Activated CD4-positive, alpha-beta memory T cell treated with anti-CD3 and anti-CD28 coated beads for 36 hours (primary cell): ENCODE measurements at regions of chr1 and their contacts with region 1.

Region 1: DNA sequence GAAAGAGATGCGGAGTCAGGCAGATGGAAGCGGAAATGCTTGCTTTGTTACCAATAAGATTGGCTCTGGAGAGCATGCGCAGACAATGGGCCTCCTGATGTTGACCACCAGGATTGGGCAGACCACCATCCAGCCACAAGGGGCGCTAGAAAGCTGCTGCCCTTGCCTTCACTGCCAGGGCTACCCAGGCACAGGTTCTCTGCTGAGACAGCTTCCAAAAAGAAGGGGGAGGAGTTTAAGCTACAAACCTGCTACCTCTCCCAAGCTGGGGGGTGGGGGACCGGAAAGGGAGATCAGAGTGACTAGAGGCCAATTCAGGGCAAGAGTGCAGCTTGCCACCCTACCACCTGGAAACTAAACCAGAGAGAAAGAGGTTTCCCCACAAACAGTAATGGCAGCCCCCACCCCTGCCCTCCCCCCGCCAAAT is 369.7 kb downstream of the RRAGC start:
- DNase-seq: peak; percentile 63
- H3K4me3 Mint-ChIP-seq: no peak overlapping the region
- H3K27ac Mint-ChIP-seq: no peak overlapping the region
- H3K4me1 Mint-ChIP-seq: no peaks in the 10 kb centered on the region
- H3K27me3 Mint-ChIP-seq: peaks cover 16% of the 10 kb centered on the region

Region 2: GRCh38 chr1:37978541-37978940 is 511.3 kb before region 1 on chr1:
- CTCF ChIA-PET with region 1: no interaction called
- POLR2A ChIA-PET with region 1: no interaction called
- intact Hi-C with region 1: no loop called
- DNase-seq: no peak
- H3K4me3 Mint-ChIP-seq: no peak overlapping the region
- H3K27ac Mint-ChIP-seq: no peak overlapping the region
- H3K4me1 Mint-ChIP-seq: no peaks in the 10 kb centered on the region
- H3K27me3 Mint-ChIP-seq: no peaks in the 10 kb centered on the region

Region 3: DNA sequence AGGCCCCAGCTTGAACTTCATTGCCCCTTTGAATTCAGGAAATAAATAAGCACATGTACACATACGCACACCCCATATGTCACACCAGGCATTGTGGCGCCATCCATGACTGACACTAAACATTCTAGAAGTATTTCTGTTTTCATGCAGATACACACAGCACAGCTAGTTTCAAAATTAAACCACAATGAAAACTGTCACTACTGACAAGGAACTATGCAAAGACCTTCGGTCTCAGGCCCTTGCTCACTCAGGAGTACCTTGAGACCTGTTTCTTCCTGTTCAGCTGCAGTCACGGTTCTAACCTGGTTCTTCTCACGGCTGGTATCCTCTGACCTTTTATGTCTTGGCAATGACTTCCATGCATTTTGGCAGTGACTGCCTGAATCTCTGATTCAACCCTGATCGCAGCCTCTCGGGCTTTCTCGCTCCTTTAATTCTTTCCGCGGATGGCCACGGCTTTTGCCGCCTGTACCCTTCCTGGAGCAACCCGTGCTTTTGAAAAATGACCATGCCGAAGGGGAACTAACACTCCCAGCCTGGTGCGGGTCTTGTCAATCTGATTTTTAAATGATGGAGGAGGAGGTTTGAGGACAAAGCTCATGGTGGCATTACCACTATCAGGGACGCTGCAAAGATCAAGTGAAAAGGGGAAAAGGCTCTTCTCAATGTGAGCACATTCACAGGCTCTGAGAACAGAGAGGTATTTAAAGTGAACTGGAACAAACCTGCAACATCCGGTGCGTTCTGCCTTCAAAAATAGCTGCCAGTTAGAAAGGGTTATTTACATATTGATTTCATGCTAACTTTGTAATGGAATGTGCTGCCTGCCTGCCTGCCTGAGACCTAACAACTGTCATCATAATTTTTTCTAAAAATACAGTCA is 14.9 kb before region 1 on chr1:
- CTCF ChIA-PET with region 1: no interaction called
- POLR2A ChIA-PET with region 1: no interaction called
- intact Hi-C with region 1: no loop called
- DNase-seq: no peak
- H3K4me3 Mint-ChIP-seq: no peak overlapping the region
- H3K27ac Mint-ChIP-seq: no peak overlapping the region
- H3K4me1 Mint-ChIP-seq: peaks cover 10% of the 10 kb centered on the region
- H3K27me3 Mint-ChIP-seq: peaks cover 40% of the 10 kb centered on the region

Region 4: DNA sequence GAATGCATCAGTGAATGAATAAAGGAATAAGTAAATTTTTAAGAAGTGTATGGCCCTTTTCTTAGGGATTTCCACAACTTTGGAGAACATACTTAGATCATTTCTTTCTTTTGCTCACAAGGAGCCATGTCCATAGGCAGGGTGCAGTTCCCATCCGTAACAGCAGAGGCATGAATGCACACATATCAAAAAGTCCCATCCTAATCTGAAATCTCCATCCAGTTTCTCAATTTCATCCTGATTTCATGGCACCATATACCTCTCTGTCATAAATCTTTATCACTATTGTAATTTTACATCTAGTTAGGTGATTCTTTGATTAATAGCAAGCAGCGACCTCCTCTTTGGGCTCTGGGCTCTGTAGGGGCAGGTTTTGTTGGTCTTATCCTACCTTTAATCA is 10.5 kb after region 1 on chr1:
- CTCF ChIA-PET with region 1: interaction called, 16 read pairs
- POLR2A ChIA-PET with region 1: no interaction called
- intact Hi-C with region 1: no loop called
- DNase-seq: no peak
- H3K4me3 Mint-ChIP-seq: no peak overlapping the region
- H3K27ac Mint-ChIP-seq: no peak overlapping the region
- H3K4me1 Mint-ChIP-seq: no peaks in the 10 kb centered on the region
- H3K27me3 Mint-ChIP-seq: peaks cover 21% of the 10 kb centered on the region

Region 5: DNA sequence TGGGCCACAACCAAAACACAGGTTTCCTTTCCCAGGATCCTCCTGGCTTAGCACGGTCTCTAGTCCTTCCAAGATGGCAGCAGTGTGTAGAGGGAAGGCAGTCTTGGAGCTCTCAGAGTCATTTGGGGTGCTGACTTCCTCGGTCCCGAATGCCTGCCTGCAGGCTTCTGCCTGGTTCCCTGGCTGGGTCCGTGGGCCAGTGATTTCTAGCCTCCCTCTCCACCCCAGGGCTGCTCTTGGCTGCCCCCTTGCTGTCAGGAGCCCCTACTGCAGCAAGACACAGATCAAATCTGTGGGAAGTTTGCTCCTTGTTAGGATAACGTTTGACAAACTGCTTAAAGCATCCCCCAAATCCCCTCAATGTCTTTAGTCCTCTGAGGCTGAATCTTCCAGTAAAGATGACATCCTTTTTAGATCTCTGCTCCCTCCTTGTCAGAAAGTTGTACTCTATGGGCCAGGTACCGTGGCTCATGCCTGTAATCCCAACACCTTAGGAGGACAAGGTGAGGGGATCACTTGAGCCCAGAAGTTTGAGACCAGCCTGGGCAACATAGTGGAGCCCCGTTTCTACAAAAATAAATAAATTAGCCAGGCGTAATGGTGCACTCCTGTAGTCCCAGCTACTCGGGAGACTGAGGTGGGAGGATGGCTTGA is 97.3 kb after region 1 on chr1:
- CTCF ChIA-PET with region 1: interaction called, 3 read pairs
- POLR2A ChIA-PET with region 1: no interaction called
- intact Hi-C with region 1: loop called (anchors 2 kb)
- DNase-seq: peak; percentile 68
- H3K4me3 Mint-ChIP-seq: no peak overlapping the region
- H3K27ac Mint-ChIP-seq: no peak overlapping the region
- H3K4me1 Mint-ChIP-seq: peaks cover 4% of the 10 kb centered on the region
- H3K27me3 Mint-ChIP-seq: peaks cover 3% of the 10 kb centered on the region